ENCODE measurements at regions of chr7 and their contacts with region 1.

Region 1: GRCh38 chr7:33904681-33905388 is 504 bp upstream of the BMPER start:
- DNase-seq: peak; percentile 69

Region 2: DNA sequence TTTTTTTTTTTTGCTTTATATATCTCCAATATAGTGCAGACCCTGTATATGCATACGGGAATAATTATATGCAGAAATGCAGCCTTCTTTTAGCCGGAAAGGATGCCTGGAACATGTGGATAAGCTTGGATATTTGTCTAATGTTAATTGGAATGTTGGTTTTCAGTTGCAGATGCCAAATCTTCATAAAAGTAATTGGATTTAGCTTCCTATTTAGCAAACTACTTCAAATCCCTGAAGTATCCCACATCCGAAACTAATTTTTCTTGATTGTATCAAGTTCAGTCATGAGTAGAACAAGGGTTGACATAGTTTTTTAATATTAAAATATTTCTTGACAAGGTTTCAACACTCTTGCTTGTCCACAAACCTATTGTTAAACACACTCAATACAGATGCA is 493.8 kb before region 1 on chr7:
- in situ Hi-C with region 1: no loop called
- DNase-seq: no peak

Region 3: DNA sequence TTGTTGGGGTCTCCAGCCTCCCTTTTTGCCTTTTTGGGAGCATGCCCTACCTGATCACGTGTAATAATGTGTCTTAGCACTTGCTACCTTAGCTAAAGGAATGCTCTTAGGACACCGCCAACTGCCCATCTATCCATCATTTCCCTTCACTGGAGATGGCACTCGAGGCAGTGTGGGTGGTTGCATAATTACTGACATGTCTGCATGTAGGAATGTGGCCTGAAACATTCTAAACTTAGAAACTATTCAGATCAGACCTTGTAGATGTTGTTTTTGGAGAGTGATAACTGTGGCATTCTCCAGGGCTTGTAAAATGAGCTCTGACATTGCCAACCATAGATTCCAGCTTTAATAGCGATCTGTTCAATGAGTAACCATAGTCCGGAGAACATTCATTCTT is 409.6 kb before region 1 on chr7:
- in situ Hi-C with region 1: loop called (anchors 25 kb)
- DNase-seq: peak; percentile 81

Region 4: GRCh38 chr7:34982371-34983019 is 1077.7 kb after region 1 on chr7:
- in situ Hi-C with region 1: no loop called
- DNase-seq: no peak

Measured in Caki2 (cell line).